ENCODE measurements at regions of chr2 and their contacts with region 1.

Region 1: GRCh38 chr2:153766415-153766814 is 105.3 kb upstream of the GALNT13 start:
- DNase-seq: no peak
- ATAC-seq: no peak
- H3K4me3 ChIP-seq: no peak overlapping the region
- H3K4me3 Mint-ChIP-seq: no peak overlapping the region
- H3K27ac ChIP-seq: no peak overlapping the region
- H3K27ac Mint-ChIP-seq: no peak overlapping the region
- H3K4me1 ChIP-seq: no peaks in the 10 kb centered on the region
- H3K4me1 Mint-ChIP-seq: no peaks in the 10 kb centered on the region
- H3K27me3 ChIP-seq: no peaks in the 10 kb centered on the region
- H3K27me3 Mint-ChIP-seq: no peaks in the 10 kb centered on the region
- CTCF ChIP-seq: no peak

Region 2: DNA sequence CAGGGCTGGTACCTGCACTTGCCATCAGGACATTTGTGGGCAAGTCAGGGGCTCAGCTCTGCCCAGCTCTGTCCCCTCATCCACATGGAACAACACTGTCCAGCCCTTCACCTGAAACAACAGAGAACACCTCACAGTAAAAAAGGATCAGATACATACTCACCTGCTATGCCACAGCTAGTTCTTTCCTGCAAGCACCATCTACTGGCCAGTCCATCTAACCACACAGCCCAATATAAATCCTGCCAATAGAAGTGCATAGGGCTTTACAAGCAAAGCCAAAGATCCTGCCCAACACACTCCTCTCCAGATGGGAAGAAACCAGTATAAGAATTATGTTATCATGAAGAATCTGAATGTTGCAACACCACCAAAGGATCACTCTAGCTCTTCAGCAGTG is 53.1 kb after region 1 on chr2:
- CTCF ChIA-PET with region 1: no interaction called
- POLR2A ChIA-PET with region 1: no interaction called
- intact Hi-C with region 1: loop called in 1 of 2 experiments (anchors 5 kb)
- DNase-seq: no peak
- ATAC-seq: no peak
- H3K4me3 ChIP-seq: no peak overlapping the region
- H3K4me3 Mint-ChIP-seq: no peak overlapping the region
- H3K27ac ChIP-seq: no peak overlapping the region
- H3K27ac Mint-ChIP-seq: no peak overlapping the region
- H3K4me1 ChIP-seq: no peaks in the 10 kb centered on the region
- H3K4me1 Mint-ChIP-seq: no peaks in the 10 kb centered on the region
- H3K27me3 ChIP-seq: no peaks in the 10 kb centered on the region
- H3K27me3 Mint-ChIP-seq: no peaks in the 10 kb centered on the region
- CTCF ChIP-seq: no peak

Region 3: GRCh38 chr2:154195644-154196195 is 429.3 kb after region 1 on chr2:
- CTCF ChIA-PET with region 1: no interaction called
- POLR2A ChIA-PET with region 1: no interaction called
- intact Hi-C with region 1: no loop called
- DNase-seq: no peak
- ATAC-seq: no peak
- H3K4me3 ChIP-seq: no peak overlapping the region
- H3K4me3 Mint-ChIP-seq: no peak overlapping the region
- H3K27ac ChIP-seq: no peak overlapping the region
- H3K27ac Mint-ChIP-seq: no peak overlapping the region
- H3K4me1 ChIP-seq: no peaks in the 10 kb centered on the region
- H3K4me1 Mint-ChIP-seq: no peaks in the 10 kb centered on the region
- H3K27me3 ChIP-seq: no peaks in the 10 kb centered on the region
- H3K27me3 Mint-ChIP-seq: no peaks in the 10 kb centered on the region
- CTCF ChIP-seq: no peak